Breast epithelium (tissue), 4 donors: ENCODE measurements at regions of chr5 and their contacts with region 1.

Region 1: GRCh38 chr5:144121577-144121976 is 48.9 kb downstream of the YIPF5 start:
- DNase-seq: no peak
- H3K4me3 ChIP-seq: no peak overlapping the region
- H3K27ac ChIP-seq: no peak overlapping the region
- H3K4me1 ChIP-seq: no peaks in the 10 kb centered on the region
- H3K27me3 ChIP-seq: no peaks in the 10 kb centered on the region
- CTCF ChIP-seq: no peak
- POLR2A ChIP-seq: no peak

Region 2: GRCh38 chr5:144254552-144254951 is 133.0 kb after region 1 on chr5:
- intact Hi-C with region 1: loop called (anchors 5 kb)
- DNase-seq: no peak
- H3K4me3 ChIP-seq: no peak overlapping the region
- H3K27ac ChIP-seq: no peak overlapping the region
- H3K4me1 ChIP-seq: no peaks in the 10 kb centered on the region
- H3K27me3 ChIP-seq: no peaks in the 10 kb centered on the region
- CTCF ChIP-seq: no peak
- POLR2A ChIP-seq: no peak

Region 3: DNA sequence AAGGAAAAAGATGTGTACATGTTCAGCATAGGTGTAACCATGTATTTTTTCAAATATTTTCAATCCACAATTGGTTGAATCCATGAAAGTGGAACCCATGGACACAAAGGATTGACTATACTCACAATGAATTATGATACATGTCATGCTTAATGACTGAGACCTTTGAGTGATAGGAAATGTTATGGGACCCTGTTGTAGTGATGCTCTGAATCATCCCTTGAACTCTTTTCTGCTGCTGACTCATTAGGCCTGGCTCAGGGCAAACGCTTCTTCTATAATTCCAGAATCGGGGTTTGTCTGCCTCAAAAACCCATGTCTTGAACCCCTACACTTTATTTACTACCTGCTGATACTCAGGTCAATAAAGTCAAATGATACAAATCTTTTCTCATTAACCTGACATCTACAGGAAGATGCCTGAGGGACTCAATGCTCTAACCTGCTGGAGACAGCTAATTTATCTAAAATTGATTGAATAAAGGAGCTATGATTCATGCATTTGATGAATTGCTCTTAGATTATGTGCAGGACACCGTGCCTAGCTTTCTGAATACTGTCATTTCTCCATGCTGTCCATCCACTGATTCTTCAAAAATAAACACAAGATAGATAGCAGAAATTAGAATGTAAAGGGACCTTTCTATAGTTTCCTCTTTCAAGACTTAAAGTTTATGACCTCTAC is 1453.5 kb after region 1 on chr5:
- intact Hi-C with region 1: no loop called
- DNase-seq: no peak
- H3K4me3 ChIP-seq: no peak overlapping the region
- H3K27ac ChIP-seq: no peak overlapping the region
- H3K4me1 ChIP-seq: no peaks in the 10 kb centered on the region
- H3K27me3 ChIP-seq: no peaks in the 10 kb centered on the region
- CTCF ChIP-seq: no peak
- POLR2A ChIP-seq: no peak